AG04449 (cell line): ENCODE measurements at regions of chr2 and their contacts with region 1.

Region 1: GRCh38 chr2:44955593-44956392 is 14.3 kb downstream of the SIX3 start:
- DNase-seq: no peak
- H3K4me3 ChIP-seq: no peak overlapping the region; the same call in 1 of the 2 replicates
- CTCF ChIP-seq: peak; percentile 93

Region 2: DNA sequence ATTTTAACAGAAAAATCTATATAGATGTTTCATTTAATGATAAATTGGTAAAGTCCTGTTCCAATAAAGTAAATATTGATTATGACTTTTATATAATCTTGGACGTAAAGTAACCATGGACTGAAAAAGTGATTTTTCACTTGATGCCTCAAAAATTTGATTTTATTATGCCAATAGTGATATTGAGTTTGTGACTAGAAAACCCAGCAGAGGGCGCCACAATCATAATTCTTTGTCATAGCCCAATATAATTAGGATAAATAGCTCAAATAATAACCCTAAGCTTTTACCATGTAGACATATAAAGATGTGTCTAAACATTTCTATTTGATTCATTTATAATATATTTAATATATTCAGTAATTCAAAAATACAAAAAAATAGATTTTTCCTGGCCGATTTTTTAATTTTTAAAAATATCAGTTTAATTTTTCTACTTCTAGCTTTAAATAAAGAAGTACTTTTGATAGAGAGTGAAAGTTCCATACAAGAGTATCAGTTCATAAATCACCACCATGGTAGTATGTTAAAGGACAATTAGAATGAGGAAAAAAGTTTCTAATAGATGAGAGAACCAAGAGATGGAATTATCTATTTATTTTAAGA is 563.4 kb before region 1 on chr2:
- CTCF ChIA-PET with region 1: interaction called, 195 read pairs
- POLR2A ChIA-PET with region 1: no interaction called
- DNase-seq: no peak
- H3K4me3 ChIP-seq: no peak overlapping the region
- CTCF ChIP-seq: peak; percentile 44

Region 3: DNA sequence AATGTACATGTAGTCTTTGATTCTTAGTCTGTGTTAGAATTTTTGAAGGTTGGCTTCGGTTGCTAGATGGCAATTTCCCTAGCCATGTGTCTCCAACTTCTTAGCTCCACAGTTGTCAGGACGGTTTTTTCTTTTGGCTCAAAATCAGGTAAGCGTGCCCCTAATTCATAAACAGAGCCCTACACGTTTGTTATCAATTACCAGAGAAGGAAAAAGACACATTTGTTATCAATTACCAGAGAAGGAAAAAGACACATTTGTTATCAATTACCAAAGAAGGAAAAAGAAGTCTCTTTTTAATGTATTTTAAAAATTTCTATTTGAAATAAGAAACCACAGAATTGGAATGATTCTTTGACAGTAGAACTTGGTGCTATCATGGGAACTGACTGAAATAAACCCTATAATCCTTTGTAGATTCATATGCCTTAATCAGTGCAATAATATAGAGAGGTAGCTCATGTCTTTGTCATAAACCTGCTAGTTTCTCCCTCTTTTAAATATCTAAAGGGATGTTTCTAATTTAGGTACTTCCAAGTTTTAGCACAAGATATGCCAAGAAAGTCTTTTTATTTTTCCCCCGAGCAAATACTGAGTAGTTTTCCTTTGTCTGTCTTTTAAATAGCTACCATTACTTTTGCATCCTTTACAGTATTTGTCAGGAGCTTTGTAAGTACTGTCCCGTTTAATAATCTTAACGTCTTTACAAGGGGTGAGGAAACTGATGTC is 558.2 kb before region 1 on chr2:
- CTCF ChIA-PET with region 1: interaction called, 195 read pairs
- POLR2A ChIA-PET with region 1: no interaction called
- DNase-seq: no peak
- H3K4me3 ChIP-seq: no peak overlapping the region; the same call in 1 of the 2 replicates
- CTCF ChIP-seq: no peak

Region 4: DNA sequence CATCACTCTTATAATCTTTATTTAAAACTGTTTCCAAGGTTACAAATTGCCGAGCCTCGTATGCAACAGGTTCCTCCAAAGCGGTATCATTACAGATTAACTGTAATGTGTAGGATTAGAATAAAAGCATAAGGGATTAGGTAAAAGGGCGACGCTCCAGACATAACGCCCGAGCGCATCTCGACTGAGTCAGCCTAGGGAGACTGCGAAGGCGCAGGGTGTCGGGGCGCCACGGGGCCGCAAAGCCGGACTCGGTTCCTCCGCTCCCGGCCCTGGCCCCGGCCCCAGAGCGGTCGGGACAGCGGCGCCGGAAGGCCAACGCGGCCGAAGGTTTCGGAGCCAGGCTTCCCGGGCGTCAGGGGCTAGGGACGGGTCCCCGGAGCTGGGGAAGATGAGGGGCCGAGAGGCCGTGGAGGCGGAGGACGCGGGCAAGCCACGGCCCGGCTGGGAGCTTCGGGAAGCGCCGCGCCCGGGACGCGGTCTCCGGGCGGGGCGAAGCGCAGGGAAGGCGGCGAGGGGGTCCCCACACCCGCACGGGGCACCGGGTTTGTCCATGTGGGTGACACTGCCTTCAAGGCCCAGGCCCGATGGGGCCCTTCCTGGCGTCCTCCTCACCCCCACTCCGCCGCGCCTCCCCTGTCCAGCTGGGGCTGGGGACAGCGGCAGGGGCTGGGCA is 27.2 kb before region 1 on chr2:
- CTCF ChIA-PET with region 1: no interaction called
- POLR2A ChIA-PET with region 1: no interaction called
- DNase-seq: no peak
- H3K4me3 ChIP-seq: no peak overlapping the region
- CTCF ChIP-seq: no peak

Region 5: GRCh38 chr2:44974064-44974715 is 18.4 kb after region 1 on chr2:
- CTCF ChIA-PET with region 1: interaction called, 81 read pairs
- POLR2A ChIA-PET with region 1: no interaction called
- DNase-seq: no peak
- H3K4me3 ChIP-seq: no peak overlapping the region
- CTCF ChIP-seq: peak; percentile 11